PC-3 (cell line): ENCODE measurements at regions of chr13 and their contacts with region 1.

Region 1: DNA sequence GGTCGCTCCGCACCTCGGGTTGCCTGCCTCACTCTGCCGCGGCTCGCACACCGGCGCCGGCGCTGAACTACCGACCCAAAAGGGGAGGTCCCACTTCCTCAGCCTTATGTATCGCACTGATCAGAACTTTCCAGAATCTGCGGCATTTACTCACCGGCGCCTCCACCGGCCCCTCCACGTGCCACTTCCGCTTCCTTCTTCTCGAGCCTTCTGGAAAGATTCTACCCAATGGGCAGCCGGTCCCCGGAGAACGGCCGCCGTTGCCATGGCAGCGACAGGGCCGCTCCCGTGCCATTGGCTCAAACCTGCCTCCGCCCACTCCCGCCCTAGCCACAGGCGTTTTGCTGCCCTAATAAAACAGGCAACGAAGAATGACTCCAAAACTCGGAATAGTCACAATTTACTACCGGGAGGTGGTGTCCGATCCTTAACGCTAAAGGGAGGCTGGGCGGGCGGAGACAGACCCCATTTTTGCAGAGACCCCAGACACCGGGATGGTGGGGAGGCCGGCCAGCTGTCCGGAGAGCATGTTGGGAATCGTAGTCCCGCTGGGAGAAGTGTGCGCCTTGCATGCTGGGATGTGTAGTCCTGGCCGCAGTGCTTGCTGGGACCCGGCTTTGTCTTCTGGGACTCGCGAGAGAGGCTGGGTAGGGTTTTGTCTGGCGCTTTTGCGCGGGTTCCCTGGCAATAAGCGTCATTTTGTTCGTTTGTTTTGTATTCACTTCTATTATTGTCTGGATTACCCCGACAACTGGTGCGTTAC is at the start of gene HSPH1:
- DNase-seq: peak; percentile 95
- ATAC-seq: peak; percentile 88
- H3K4me3 ChIP-seq: peak within 1 kb of the TSS; percentile 96
- H3K27ac ChIP-seq: peak within 1 kb of the TSS; percentile 40; the same call in 1 of the 2 replicates
- H3K4me1 ChIP-seq: peaks cover 32% of the 10 kb centered on the region
- H3K27me3 ChIP-seq: no peaks in the 10 kb centered on the region
- CTCF ChIP-seq: 0 out of 2 replicates have a peak, but pooled peaks have one; percentile 12
- total RNA-seq, gene HSPH1: 83.7 and 102 TPM in 2 replicates

Region 2: DNA sequence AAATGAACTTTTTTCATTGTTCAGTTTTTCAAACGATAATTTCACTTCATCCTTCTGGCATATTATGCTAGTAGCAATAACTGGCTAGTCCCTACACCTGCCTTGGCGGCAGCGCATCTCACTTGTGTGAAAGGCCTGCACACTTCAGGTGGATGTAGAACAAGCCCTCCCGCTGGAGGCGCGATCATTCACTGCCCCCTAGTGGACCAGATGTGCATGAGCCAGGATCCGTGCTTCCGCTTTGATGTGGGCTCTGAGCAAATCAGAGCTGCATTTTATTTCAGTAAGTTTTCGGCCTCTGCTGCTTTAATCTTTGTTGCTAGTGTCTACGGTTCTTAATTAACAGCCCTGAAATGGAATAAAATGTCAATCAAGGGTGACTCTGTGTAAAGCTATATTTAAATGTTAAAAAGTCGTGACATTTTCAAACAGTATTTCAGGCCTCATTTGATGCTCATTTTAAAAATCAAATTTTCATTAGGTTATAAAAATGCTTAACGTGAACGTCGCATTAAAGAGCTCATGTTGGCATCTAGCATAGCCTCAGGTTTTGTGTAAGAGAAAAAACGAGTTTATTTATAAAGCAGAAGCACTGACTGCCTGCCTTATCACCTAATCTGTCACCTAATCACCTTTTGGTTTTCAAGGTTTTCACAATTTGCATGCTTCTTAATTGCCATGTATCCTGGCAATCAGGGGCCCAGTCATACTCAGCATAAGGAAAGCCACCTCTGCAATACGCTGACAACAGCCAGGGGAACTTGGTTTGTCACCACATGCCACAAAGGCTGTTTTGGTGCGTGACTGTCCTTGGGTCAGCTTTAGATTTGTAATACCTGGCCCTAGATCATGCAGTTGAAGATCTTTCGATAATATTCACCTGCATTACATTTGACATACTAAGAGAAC is 117.4 kb before region 1 on chr13:
- CTCF ChIA-PET with region 1: no interaction called
- POLR2A ChIA-PET with region 1: no interaction called
- intact Hi-C with region 1: loop called (anchors 5 kb)
- DNase-seq: peak; percentile 86
- ATAC-seq: peak; percentile 70
- H3K4me3 ChIP-seq: peak overlapping the region; percentile 42; the same call in 1 of the 2 replicates
- H3K27ac ChIP-seq: peak overlapping the region; percentile 93
- H3K4me1 ChIP-seq: peaks cover 24% of the 10 kb centered on the region
- H3K27me3 ChIP-seq: no peaks in the 10 kb centered on the region
- CTCF ChIP-seq: peak; percentile 89

Region 3: DNA sequence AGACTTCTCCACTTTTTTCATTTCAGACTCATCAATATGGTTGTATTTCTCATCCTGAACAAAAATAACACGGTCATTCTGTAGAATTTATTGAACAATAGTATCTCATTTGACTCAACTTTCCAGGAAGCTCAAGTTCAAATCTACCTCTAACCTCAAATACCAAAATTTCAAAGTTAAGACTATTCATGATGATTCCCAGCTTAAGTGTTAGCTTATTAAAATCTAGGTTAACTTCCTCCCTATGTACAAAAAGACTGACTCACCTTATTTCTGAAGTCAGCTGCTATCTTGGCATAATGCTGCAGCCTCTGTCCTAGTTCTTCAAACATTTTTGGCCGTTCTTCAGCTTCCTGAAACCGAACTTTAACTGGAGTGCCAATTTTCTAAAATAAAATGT is 23.5 kb before region 1 on chr13:
- CTCF ChIA-PET with region 1: no interaction called
- POLR2A ChIA-PET with region 1: no interaction called
- intact Hi-C with region 1: loop called (anchors 2 kb)
- DNase-seq: peak; percentile 9
- ATAC-seq: peak; percentile 70
- H3K4me3 ChIP-seq: no peak overlapping the region
- H3K27ac ChIP-seq: no peak overlapping the region
- H3K4me1 ChIP-seq: no peaks in the 10 kb centered on the region
- H3K27me3 ChIP-seq: no peaks in the 10 kb centered on the region
- CTCF ChIP-seq: no peak

Region 4: GRCh38 chr13:31174018-31174417 is 12.0 kb after region 1 on chr13:
- CTCF ChIA-PET with region 1: no interaction called
- POLR2A ChIA-PET with region 1: no interaction called
- intact Hi-C with region 1: loop called (anchors 1 kb)
- DNase-seq: peak; percentile 38
- ATAC-seq: peak; percentile 45
- H3K4me3 ChIP-seq: no peak overlapping the region
- H3K27ac ChIP-seq: no peak overlapping the region
- H3K4me1 ChIP-seq: peaks cover 29% of the 10 kb centered on the region
- H3K27me3 ChIP-seq: no peaks in the 10 kb centered on the region
- CTCF ChIP-seq: peak; percentile 45

Region 5: DNA sequence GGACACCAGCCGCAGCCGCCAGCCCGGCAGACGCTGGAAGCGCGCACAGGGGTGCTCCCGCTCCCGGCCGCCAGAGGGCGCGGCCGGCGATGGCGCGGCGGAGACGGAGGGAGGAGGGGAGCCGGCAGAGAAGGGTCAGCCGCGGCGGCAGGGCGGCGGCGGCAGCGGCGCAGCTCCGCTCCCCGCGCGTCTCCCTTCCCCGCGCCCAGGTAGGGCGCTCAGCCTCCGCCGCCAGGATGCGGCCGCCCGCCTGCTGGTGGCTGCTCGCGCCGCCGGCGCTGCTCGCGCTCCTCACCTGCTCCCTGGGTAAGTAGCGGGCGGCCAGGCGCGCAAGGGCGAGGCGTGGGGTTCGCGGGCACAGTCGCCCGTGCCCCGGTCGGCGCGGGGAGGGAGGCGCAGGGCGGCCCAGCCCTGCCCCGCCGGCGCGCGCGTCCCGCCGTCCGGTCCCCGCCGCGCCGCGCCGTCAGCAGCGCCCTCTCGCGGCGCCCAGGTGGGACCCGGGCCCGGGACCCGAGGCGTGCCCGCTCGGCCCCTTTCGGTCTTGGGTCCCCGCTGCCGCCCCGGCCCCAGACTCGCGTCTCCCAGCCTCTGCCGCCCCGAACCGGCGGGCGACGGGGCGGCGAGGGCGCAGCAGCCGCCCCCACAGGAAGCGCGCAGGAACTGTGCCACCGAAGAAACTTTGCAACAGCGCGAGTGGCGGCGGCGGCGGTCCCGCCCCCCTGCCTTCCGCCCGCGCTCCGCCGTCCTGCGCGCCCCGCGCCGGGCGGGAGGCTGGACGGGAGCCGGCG is 38.0 kb after region 1 on chr13 and contains the start of gene B3GLCT:
- CTCF ChIA-PET with region 1: interaction called, 3 read pairs
- POLR2A ChIA-PET with region 1: no interaction called
- intact Hi-C with region 1: loop called (anchors 5 kb)
- DNase-seq: peak; percentile 87
- ATAC-seq: peak; percentile 80
- H3K4me3 ChIP-seq: peak within 1 kb of the TSS; percentile 78
- H3K27ac ChIP-seq: no peak within 1 kb of the TSS
- H3K4me1 ChIP-seq: peaks cover 24% of the 10 kb centered on the region
- H3K27me3 ChIP-seq: no peaks in the 10 kb centered on the region
- CTCF ChIP-seq: peak; percentile 63
- total RNA-seq, gene B3GLCT: 3.2 TPM in 2 replicates

Region 6: GRCh38 chr13:31377946-31378345 is 215.9 kb after region 1 on chr13:
- CTCF ChIA-PET with region 1: no interaction called
- POLR2A ChIA-PET with region 1: no interaction called
- intact Hi-C with region 1: no loop called
- DNase-seq: no peak
- ATAC-seq: no peak
- H3K4me3 ChIP-seq: no peak overlapping the region
- H3K27ac ChIP-seq: no peak overlapping the region
- H3K4me1 ChIP-seq: no peaks in the 10 kb centered on the region
- H3K27me3 ChIP-seq: peaks cover 45% of the 10 kb centered on the region
- CTCF ChIP-seq: no peak